ENCODE measurements at regions of chr15 and their contacts with region 1.

Region 1: GRCh38 chr15:40793216-40793989 is 13.5 kb upstream of the ZFYVE19 start:
- DNase-seq: peak; percentile 36 to 58
- ATAC-seq: peak in 3 of 4 donors; percentile 58 to 62 (median 59)
- H3K4me3 ChIP-seq: no peak overlapping the region
- H3K27ac ChIP-seq: no peak overlapping the region
- H3K4me1 ChIP-seq: peaks cover 13% of the 10 kb centered on the region
- H3K27me3 ChIP-seq: no peaks in the 10 kb centered on the region
- CTCF ChIP-seq: no peak

Region 2: GRCh38 chr15:40812728-40813425 is 19.5 kb after region 1 on chr15:
- intact Hi-C with region 1: loop called in 1 of 2 experiments (anchors 1 kb)
- DNase-seq: peak in 1 of 2 donors; percentile 26
- ATAC-seq: no peak
- H3K4me3 ChIP-seq: no peak overlapping the region
- H3K27ac ChIP-seq: no peak overlapping the region
- H3K4me1 ChIP-seq: peaks cover 3% of the 10 kb centered on the region
- H3K27me3 ChIP-seq: no peaks in the 10 kb centered on the region
- CTCF ChIP-seq: no peak

Measured in psoas muscle (tissue), 8 donors.